ENCODE measurements at regions of chrX and their contacts with region 1.

Region 1: DNA sequence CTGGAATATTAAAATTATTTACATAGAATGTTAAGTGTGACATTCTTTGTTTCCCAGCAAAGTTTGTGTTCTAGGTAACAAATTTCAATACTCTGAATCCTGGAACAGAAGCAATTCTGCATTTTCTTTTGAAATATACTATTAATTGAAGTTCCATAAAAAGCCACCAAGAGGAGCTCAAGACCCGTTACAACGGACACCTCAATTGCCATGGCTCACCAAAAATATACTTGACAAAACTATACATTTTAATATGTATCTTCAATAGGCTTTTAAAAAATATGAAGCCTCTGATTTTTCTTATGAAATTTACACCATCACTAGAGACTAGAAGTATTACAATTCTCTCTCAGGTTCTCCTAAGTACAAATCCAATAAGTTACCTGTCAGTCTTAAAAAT is 111.4 kb downstream of the NYX start:
- DNase-seq: peak; percentile 21
- ATAC-seq: no peak
- H3K4me3 Mint-ChIP-seq: no peak overlapping the region
- H3K27ac Mint-ChIP-seq: no peak overlapping the region
- H3K4me1 Mint-ChIP-seq: peaks cover 49% of the 10 kb centered on the region
- H3K27me3 Mint-ChIP-seq: no peaks in the 10 kb centered on the region

Region 2: GRCh38 chrX:41580423-41581064 is 22.0 kb after region 1 on chrX:
- CTCF ChIA-PET with region 1: no interaction called
- POLR2A ChIA-PET with region 1: no interaction called
- DNase-seq: no peak
- ATAC-seq: no peak
- H3K4me3 Mint-ChIP-seq: no peak overlapping the region
- H3K27ac Mint-ChIP-seq: peak overlapping the region; percentile 39
- H3K4me1 Mint-ChIP-seq: peaks cover 3% of the 10 kb centered on the region
- H3K27me3 Mint-ChIP-seq: no peaks in the 10 kb centered on the region

Region 3: GRCh38 chrX:41759817-41760216 is 201.3 kb after region 1 on chrX:
- CTCF ChIA-PET with region 1: interaction called, 15 read pairs
- POLR2A ChIA-PET with region 1: interaction called, 3 read pairs
- DNase-seq: peak; percentile 23
- ATAC-seq: no peak
- H3K4me3 Mint-ChIP-seq: no peak overlapping the region
- H3K27ac Mint-ChIP-seq: no peak overlapping the region
- H3K4me1 Mint-ChIP-seq: peaks cover 6% of the 10 kb centered on the region
- H3K27me3 Mint-ChIP-seq: no peaks in the 10 kb centered on the region

Measured in activated CD8-positive, alpha-beta T cell treated with anti-CD3 and anti-CD28 coated beads, Interleukin-2, amount 10 ng/mL, durations not matched to agents 7 days and 5 days (primary cell).